Gastrocnemius medialis (tissue), 4 donors: ENCODE measurements at regions of chr9 and their contacts with region 1.

Region 1: DNA sequence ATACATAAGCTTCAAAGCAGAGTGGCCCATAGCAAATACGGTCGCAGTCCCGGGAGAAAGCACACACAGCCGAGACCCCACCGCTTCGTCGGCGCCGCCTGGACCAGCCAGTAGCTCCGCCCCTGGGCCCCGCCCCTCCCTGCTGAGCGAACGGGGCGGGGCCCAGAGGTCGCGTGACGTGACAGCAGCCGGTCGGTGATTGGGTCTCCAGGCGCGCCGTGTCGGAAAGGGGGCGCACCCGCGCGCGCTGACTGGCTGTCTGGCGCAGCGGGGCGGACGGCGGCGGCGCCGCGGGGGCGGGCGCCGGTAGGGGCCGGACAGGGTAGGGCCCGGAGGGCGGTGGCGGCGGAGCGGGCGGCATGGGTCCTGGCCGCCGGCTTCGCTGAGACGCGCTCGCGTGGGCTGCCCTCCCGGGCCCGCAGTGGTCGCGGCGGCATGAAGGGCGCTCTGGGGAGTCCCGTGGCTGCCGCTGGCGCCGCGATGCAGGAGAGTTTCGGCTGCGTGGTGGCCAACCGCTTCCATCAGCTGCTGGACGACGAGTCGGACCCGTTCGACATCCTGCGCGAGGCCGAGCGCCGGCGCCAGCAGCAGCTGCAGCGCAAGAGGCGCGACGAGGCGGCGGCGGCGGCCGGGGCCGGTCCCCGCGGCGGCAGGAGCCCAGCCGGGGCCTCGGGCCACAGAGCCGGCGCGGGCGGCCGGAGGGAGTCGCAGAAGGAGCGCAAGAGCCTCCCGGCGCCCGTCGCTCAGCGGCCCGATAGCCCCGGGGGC is at the start of gene HABP4:
- DNase-seq: peak; percentile 94
- ATAC-seq: peak; percentile 95 to 96
- H3K4me3 ChIP-seq: peak within 1 kb of the TSS; percentile 71 to 85 (median 76)
- H3K27ac ChIP-seq: peak within 1 kb of the TSS; percentile 78 to 88 (median 87)
- H3K4me1 ChIP-seq: peaks cover 7 to 10% of the 10 kb centered on the region in 2 donors
- H3K27me3 ChIP-seq: no peaks in the 10 kb centered on the region
- CTCF ChIP-seq: peak in 2 of 5 experiments; percentile 5 to 20
- POLR2A ChIP-seq: peak; percentile 94 to 95
- total RNA-seq, gene HABP4: 6.2 to 19.3 (median 12.3) TPM

Region 2: DNA sequence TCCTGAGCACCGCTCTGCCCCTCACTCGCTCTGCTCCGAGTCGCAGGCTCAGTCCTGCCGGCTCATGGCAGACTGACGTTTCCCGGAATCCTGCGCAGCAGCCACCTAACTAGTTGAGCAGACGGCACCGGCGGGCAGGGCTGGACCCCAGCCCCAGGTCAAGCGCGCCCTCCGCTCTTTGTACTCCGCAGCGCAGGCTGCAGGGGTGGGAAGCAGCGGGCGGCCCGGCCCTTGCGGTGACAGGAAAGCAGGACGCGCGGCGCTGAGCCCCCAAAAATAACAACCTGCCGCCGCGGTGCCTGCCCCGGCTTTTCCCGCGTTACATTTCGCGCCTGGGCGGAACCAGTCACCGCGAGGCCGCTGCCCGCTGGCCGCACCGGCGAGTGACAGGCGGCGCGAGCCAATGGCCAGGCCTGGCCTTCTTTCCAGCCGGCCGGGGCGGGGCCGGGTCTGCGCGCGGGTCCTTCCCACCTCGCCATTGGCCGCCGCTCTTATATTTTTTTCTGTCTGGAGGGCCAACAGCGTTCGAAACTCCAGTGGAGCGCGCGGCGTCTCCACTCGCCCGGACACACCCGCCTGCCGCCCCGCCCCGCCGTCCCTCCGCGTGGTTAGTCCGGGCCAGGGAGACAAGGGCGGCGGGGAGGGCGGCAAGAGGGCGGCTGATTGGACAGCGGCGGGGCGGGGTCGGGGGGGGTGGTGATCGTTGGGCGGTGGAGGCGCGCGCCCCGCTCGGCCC is 31.8 kb before region 1 on chr9 and contains the start of gene ZNF367:
- in situ Hi-C with region 1: no loop called
- intact Hi-C with region 1: loop called (anchors 1 kb)
- DNase-seq: peak; percentile 96 to 98
- ATAC-seq: peak; percentile 77 to 82
- H3K4me3 ChIP-seq: peak within 1 kb of the TSS; percentile 71 to 89 (median 84)
- H3K27ac ChIP-seq: peak within 1 kb of the TSS; percentile 99
- H3K4me1 ChIP-seq: peaks cover 21 to 26% of the 10 kb centered on the region in 2 donors
- H3K27me3 ChIP-seq: no peaks in the 10 kb centered on the region
- CTCF ChIP-seq: no peak
- POLR2A ChIP-seq: peak in 1 of 2 donors; percentile 8
- total RNA-seq, gene ZNF367: 0.15 to 5.1 (median 1.7) TPM

Region 3: GRCh38 chr9:96619491-96620154 is 169.6 kb after region 1 on chr9 and contains the start of gene CDC14B:
- in situ Hi-C with region 1: no loop called
- intact Hi-C with region 1: loop called (anchors 2 kb)
- DNase-seq: peak; percentile 57 to 74
- ATAC-seq: peak; percentile 58 to 70
- H3K4me3 ChIP-seq: peak within 1 kb of the TSS; percentile 60 to 71 (median 66)
- H3K27ac ChIP-seq: peak within 1 kb of the TSS; percentile 78 to 98 (median 89)
- H3K4me1 ChIP-seq: peaks cover 0 to 8% of the 10 kb centered on the region in 2 donors
- H3K27me3 ChIP-seq: no peaks in the 10 kb centered on the region
- CTCF ChIP-seq: peak in 2 of 5 experiments; percentile 9 to 14
- POLR2A ChIP-seq: peak in 1 of 2 donors; percentile 27
- total RNA-seq, gene CDC14B: 2.0 to 9.4 (median 5.5) TPM

Region 4: GRCh38 chr9:96661711-96662110 is 211.7 kb after region 1 on chr9:
- in situ Hi-C with region 1: loop called in 2 of 4 experiments (anchors 5 to 10 kb)
- intact Hi-C with region 1: no loop called
- DNase-seq: no peak
- ATAC-seq: no peak
- H3K4me3 ChIP-seq: no peak overlapping the region
- H3K27ac ChIP-seq: no peak overlapping the region
- H3K4me1 ChIP-seq: no peaks in the 10 kb centered on the region
- H3K27me3 ChIP-seq: no peaks in the 10 kb centered on the region
- CTCF ChIP-seq: no peak
- POLR2A ChIP-seq: no peak

Region 5: GRCh38 chr9:96674914-96675538 is 225.0 kb after region 1 on chr9:
- in situ Hi-C with region 1: loop called in 1 of 4 experiments (anchors 5 kb)
- intact Hi-C with region 1: no loop called
- DNase-seq: no peak
- ATAC-seq: no peak
- H3K4me3 ChIP-seq: no peak overlapping the region
- H3K27ac ChIP-seq: no peak overlapping the region
- H3K4me1 ChIP-seq: no peaks in the 10 kb centered on the region
- H3K27me3 ChIP-seq: no peaks in the 10 kb centered on the region
- CTCF ChIP-seq: no peak
- POLR2A ChIP-seq: no peak